AG04450 (cell line): ENCODE measurements at regions of chr3 and their contacts with region 1.

Region 1: GRCh38 chr3:52046186-52046913 is 10.0 kb downstream of the DUSP7 start:
- DNase-seq: peak; percentile 87
- H3K4me3 ChIP-seq: no peak overlapping the region
- H3K27ac ChIP-seq: peak overlapping the region; percentile 97
- H3K27me3 ChIP-seq: no peaks in the 10 kb centered on the region
- CTCF ChIP-seq: no peak

Region 2: GRCh38 chr3:51955893-51956770 is 90.2 kb before region 1 on chr3:
- CTCF ChIA-PET with region 1: no interaction called
- POLR2A ChIA-PET with region 1: no interaction called
- DNase-seq: no peak
- H3K4me3 ChIP-seq: no peak overlapping the region
- H3K27ac ChIP-seq: no peak overlapping the region
- H3K27me3 ChIP-seq: no peaks in the 10 kb centered on the region
- CTCF ChIP-seq: peak; percentile 49

Region 3: DNA sequence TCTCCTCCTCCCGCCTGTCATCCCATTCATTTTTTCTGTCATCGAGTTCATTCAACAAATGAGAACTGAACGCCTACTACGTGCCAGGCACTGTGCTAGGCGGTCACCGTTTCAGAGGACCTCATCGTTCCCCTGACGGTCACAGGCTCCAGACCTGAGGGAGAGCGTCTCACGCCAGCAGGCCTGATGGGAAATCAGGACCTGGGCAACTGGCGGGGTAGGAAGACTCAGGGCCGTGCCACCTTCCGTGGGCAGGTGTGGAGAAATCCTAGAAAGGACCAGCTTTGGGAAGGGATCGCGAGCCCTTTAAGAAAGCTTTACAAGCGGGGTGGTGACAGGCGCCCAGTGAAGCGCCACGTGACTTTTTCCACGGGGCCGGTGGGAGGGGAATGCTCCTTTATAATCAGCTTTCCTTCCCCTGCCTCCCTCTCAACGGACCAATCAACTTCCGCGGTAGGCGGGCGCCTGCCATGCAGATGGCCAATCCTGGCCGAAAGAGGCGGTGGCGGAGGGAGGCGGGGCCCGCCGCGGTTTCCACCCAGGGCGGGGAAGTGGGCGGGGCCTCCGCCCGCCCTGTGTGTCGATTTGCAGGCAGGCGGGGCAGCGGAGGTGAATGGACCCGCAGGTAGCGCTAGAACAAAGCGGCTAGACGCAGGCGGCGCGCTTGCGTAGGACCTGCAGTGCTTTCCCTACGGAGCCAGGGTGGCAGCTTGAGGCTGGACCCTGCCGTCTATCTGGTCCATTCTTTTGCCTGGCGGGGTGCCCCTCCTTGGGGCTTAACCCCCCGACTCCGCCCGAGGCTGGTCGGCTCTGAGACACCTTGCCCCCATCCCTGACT is 10.8 kb after region 1 on chr3:
- CTCF ChIA-PET with region 1: interaction called, 3 read pairs
- POLR2A ChIA-PET with region 1: interaction called, 24 read pairs
- DNase-seq: peak; percentile 95
- H3K4me3 ChIP-seq: peak overlapping the region; percentile 68
- H3K27ac ChIP-seq: peak overlapping the region; percentile 77
- H3K27me3 ChIP-seq: no peaks in the 10 kb centered on the region
- CTCF ChIP-seq: no peak

Region 4: DNA sequence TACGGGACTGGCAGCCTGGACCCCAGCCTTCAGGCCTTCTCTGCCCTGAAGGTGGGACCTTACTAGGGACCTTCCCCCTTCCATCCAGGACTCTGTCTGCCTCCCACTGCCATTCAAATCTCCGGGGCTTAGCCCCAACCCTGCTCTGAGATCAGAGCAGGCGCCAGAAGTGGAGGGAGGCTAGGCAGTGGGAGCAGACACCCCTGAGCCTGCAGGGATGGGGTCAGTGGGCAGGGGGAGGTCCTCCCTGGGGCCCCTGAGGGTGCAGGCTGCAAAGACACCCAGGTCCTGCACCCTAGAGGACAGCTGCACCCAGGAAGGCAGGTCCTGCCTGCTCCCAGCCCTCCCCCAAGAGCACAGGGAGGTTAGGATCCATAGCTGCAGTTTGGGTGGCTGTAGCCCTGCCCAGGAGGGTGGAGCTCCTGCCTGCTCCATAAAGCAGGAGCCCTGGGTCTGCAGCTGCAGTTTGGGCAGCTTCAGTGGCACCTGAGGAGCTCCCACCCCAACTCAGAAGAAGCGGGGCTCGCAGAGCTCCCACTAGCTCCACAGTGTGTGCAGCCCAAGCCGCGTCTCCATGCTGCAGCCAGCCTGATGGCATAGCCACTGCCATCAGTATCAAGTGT is 116.0 kb after region 1 on chr3:
- CTCF ChIA-PET with region 1: no interaction called
- POLR2A ChIA-PET with region 1: no interaction called
- DNase-seq: no peak
- H3K4me3 ChIP-seq: no peak overlapping the region
- H3K27ac ChIP-seq: no peak overlapping the region
- H3K27me3 ChIP-seq: peaks cover 2% of the 10 kb centered on the region
- CTCF ChIP-seq: no peak